Head of caudate nucleus (tissue), 42 donors: ENCODE measurements at regions of chr19 and their contacts with region 1.

Region 1: GRCh38 chr19:48108997-48109782 is 1.4 kb downstream of the PLA2G4C start:
- DNase-seq: no peak

Region 2: DNA sequence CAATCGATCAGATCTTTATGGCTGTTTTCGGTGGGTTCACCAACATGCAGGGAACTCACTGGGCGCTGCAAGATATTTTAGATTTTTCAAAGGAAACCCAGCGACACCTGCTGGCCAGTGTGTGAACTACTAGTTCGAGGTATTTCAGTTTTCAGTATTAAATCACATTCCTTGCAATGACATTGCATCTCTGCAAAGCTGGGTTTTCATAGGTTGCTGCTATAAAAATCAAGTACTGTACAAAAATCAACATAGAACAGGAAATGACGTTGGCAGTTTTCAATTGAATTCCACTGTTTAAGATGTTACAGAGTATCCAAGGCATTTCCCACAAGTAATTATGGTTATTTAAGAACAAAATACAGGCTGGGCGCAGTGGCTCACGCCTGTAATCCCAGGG is 43.4 kb after region 1 on chr19:
- intact Hi-C with region 1: loop called (anchors 5 kb)
- DNase-seq: peak; percentile 21 to 92 (median 80)

Region 3: GRCh38 chr19:48170038-48170812 is 61.0 kb after region 1 on chr19 and contains the starts of genes LIG1 and ZSWIM9:
- intact Hi-C with region 1: no loop called
- DNase-seq: peak; percentile 88 to 98 (median 96)